Activated CD8-positive, alpha-beta memory T cell treated with anti-CD3 and anti-CD28 coated beads, Interleukin-2, amount 10 ng/mL, durations not matched to agents 7 days and 5 days (primary cell): ENCODE measurements at regions of chr17 and their contacts with region 1.

Region 1: DNA sequence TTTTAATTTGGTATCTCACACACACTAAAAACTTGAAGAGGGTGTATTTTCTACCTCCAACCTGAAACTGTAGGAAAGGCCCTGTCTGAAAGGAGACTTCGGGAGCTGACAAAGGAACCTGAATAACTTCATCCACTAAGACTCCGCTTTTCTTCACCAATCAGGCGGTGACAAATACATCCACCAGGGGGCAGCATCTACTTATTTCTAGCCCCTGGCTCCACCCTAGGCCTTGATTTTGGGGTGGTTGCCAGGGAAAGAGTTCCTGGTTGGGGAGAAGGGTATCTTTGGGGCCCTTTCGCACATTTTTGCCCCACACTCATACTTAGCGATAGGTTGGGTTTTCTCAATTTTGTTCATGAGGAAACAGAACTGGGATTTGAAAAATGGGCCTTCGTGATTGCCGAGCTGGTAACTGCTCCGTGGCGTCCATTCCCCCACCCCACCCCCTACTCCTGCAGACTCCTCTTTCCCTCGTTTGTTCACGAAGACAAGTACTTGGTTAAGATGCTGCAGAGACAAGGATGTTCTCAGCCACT is 4.8 kb upstream of the ARL4D start:
- DNase-seq: peak; percentile 94
- ATAC-seq: peak; percentile 57
- H3K4me3 Mint-ChIP-seq: no peak overlapping the region
- H3K27ac Mint-ChIP-seq: peak overlapping the region; percentile 43
- H3K4me1 Mint-ChIP-seq: peaks cover 31% of the 10 kb centered on the region
- H3K27me3 Mint-ChIP-seq: no peaks in the 10 kb centered on the region

Region 2: GRCh38 chr17:43360739-43361505 is 33.1 kb before region 1 on chr17:
- CTCF ChIA-PET with region 1: interaction called, 15 read pairs
- DNase-seq: peak; percentile 97
- ATAC-seq: peak; percentile 82
- H3K4me3 Mint-ChIP-seq: peak overlapping the region; percentile 88
- H3K27ac Mint-ChIP-seq: peak overlapping the region; percentile 99
- H3K4me1 Mint-ChIP-seq: peaks cover 32% of the 10 kb centered on the region
- H3K27me3 Mint-ChIP-seq: no peaks in the 10 kb centered on the region

Region 3: DNA sequence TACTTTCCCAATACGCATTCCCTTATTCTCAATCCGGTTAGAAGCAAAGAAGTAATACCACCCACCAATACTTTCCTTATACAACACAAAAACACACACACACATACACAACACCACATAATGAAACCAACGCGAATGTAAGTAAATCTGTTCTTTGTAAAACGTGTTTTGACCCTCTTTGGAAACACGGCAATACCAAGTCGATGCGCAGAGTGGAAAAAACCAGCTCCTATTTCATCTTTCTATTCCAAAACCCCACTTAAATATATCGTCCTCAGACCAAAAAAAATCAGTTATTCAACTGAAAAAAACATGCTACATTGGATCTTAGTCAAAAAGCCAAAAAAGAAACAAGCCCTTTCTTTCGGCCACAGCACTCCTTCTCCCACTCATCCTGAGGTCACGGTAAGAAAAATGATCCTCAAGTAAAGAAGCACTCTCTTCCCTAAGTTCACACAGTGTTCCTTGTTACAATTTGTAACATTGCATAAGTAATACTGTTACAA is 26.2 kb before region 1 on chr17:
- CTCF ChIA-PET with region 1: interaction called, 18 read pairs
- DNase-seq: peak; percentile 74
- ATAC-seq: peak; percentile 57
- H3K4me3 Mint-ChIP-seq: peak overlapping the region; percentile 90
- H3K27ac Mint-ChIP-seq: peak overlapping the region; percentile 99
- H3K4me1 Mint-ChIP-seq: peaks cover 40% of the 10 kb centered on the region
- H3K27me3 Mint-ChIP-seq: no peaks in the 10 kb centered on the region

Region 4: DNA sequence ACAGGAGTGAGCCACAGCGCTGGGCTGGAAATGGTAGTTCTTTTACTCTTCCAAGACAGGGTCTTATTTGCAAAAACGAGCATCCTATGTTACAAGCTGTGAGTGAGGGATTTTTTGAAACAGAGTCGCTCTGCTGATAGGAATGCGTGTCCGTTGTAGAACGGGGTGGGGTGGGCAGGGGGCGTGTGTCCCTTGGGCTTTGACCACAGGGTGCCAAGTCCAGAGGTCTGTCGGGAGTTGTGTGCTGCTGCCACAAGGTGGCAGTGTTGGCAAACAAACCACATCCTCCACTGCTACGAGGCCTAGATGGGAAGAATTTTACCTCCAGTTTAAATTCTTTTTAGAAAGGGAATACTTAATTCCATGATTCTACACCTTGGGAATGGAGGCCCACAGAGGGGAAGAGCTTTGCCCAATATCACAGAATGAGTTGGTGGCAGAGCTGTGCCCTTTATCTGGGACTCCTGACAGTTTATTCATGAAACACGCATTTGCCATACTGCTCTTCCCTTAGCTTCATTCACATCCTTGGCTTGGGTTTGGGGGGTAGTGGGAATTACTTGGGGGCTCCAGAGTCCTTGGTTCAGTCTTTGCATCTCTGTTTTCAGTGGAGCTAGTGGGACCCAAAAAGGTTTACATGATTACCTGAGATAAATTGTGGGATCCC is 182.7 kb after region 1 on chr17:
- CTCF ChIA-PET with region 1: interaction called, 10 read pairs
- DNase-seq: peak; percentile 70
- ATAC-seq: peak; percentile 85
- H3K4me3 Mint-ChIP-seq: no peak overlapping the region
- H3K27ac Mint-ChIP-seq: no peak overlapping the region
- H3K4me1 Mint-ChIP-seq: peaks cover 16% of the 10 kb centered on the region
- H3K27me3 Mint-ChIP-seq: peaks cover 5% of the 10 kb centered on the region

Region 5: DNA sequence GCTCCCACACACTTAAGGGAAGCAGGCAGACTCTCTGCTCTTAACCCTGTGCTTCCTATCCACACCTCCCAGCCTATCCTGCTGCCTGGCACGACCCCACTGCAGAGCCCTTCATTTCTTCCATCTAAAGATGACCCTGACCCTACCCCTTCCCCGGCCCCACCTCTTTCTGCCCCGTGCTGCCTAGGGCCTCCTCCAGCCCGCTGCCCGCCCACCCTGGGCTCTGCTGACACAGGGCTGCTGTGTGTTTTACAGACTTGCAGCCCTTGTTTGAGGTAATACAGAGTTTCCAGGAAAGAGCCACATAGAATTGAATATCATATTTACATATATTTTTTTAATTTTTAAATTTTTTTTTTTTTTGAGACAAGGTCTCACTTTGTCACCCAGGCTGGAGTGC is 225.7 kb after region 1 on chr17:
- CTCF ChIA-PET with region 1: no interaction called
- DNase-seq: no peak
- ATAC-seq: no peak
- H3K4me3 Mint-ChIP-seq: no peak overlapping the region
- H3K27ac Mint-ChIP-seq: no peak overlapping the region
- H3K4me1 Mint-ChIP-seq: no peaks in the 10 kb centered on the region
- H3K27me3 Mint-ChIP-seq: peaks cover 27% of the 10 kb centered on the region